ENCODE measurements at regions of chr7 and their contacts with region 1.

Region 1: DNA sequence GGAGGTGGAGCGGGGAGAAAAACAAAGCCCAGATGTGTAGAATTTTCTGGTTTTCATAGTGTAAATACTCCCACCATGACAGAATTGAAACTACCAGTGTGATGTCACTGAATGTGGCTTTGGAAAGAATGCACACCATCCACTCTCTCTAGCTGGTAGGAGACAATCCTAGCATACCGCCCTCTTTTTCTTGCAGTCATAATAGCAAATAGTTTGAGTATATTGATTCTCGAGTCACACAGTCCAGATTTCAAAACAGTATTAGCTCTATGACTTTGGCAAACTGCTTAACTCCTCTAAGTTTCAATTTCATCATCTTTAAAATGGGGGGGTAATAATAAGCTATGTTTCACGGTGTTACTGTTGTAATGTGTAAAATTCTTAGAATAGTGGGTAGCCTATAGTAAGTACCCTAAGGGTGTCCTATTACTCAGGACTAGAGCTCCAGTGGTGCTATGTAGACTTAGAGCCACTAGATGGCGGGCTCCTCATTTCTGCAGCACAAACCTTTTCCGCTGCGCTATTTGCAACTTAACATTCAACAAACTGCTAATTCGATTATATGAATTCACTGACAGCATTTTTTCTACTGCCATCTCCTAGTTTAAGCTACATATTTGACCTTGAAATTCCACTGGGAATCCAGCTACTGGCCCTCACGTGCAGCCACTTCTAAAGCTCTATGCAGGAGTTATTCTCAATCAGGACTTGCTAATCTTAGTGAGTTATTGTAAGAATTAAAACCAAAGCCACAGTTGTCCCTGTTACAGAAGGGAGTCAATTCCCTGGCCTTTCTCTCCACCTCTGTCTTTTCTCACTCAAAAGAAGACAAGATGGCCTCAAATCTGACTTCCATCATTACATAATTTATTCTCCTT is 18.7 kb downstream of the TAS2R40 start:
- DNase-seq: peak; percentile 87
- ATAC-seq: peak; percentile 66
- H3K4me3 ChIP-seq: peak overlapping the region; percentile 46; the same call in 1 of the 2 replicates
- H3K27ac ChIP-seq: peak overlapping the region; percentile 62
- H3K4me1 ChIP-seq: peaks cover 45% of the 10 kb centered on the region
- H3K27me3 ChIP-seq: no peaks in the 10 kb centered on the region
- CTCF ChIP-seq: peak; percentile 94

Region 2: DNA sequence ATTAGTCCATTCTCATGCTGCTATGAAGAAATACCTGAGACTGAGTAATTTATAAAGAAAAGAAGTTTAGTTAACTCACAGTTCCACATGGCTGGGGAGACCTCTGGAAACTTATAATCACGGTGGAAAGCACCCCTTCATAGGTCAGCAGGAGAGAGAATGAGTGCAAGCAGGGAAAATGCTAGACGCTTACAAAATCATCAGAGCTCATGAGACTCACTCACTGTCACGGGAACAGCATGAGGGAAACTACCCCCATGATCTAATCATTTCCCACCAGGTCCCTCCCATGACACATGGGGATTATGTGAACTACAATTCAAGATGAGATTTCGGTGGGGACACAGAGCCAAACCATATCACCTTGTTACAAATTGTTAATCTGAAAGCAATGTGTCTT is 41.5 kb before region 1 on chr7:
- CTCF ChIA-PET with region 1: no interaction called
- POLR2A ChIA-PET with region 1: no interaction called
- intact Hi-C with region 1: no loop called
- DNase-seq: no peak
- ATAC-seq: no peak
- H3K4me3 ChIP-seq: no peak overlapping the region
- H3K27ac ChIP-seq: no peak overlapping the region
- H3K4me1 ChIP-seq: no peaks in the 10 kb centered on the region
- H3K27me3 ChIP-seq: peaks cover 30% of the 10 kb centered on the region; the same call in 1 of the 2 replicates
- CTCF ChIP-seq: no peak

Region 3: GRCh38 chr7:143214789-143215679 is 25.5 kb before region 1 on chr7:
- CTCF ChIA-PET with region 1: interaction called, 14 read pairs
- POLR2A ChIA-PET with region 1: interaction called, 3 read pairs
- intact Hi-C with region 1: no loop called
- DNase-seq: peak; percentile 91
- ATAC-seq: peak; percentile 81
- H3K4me3 ChIP-seq: no peak overlapping the region
- H3K27ac ChIP-seq: no peak overlapping the region
- H3K4me1 ChIP-seq: no peaks in the 10 kb centered on the region
- H3K27me3 ChIP-seq: peaks cover 6% of the 10 kb centered on the region; the same call in 1 of the 2 replicates
- CTCF ChIP-seq: peak; percentile 100

Region 4: GRCh38 chr7:143279186-143280098 is 38.9 kb after region 1 on chr7:
- CTCF ChIA-PET with region 1: interaction called, 7 read pairs
- POLR2A ChIA-PET with region 1: no interaction called
- intact Hi-C with region 1: loop called (anchors 1 kb)
- DNase-seq: peak; percentile 91
- ATAC-seq: peak; percentile 80
- H3K4me3 ChIP-seq: peak overlapping the region; percentile 20; the same call in 1 of the 2 replicates
- H3K27ac ChIP-seq: peak overlapping the region; percentile 57
- H3K4me1 ChIP-seq: peaks cover 34% of the 10 kb centered on the region
- H3K27me3 ChIP-seq: no peaks in the 10 kb centered on the region
- CTCF ChIP-seq: no peak

Region 5: GRCh38 chr7:143305423-143306070 is 65.0 kb after region 1 on chr7:
- CTCF ChIA-PET with region 1: interaction called, 15 read pairs
- POLR2A ChIA-PET with region 1: interaction called, 5 read pairs
- intact Hi-C with region 1: loop called (anchors 1 kb)
- DNase-seq: peak; percentile 85
- ATAC-seq: peak; percentile 65
- H3K4me3 ChIP-seq: no peak overlapping the region
- H3K27ac ChIP-seq: no peak overlapping the region
- H3K4me1 ChIP-seq: peaks cover 18% of the 10 kb centered on the region
- H3K27me3 ChIP-seq: no peaks in the 10 kb centered on the region
- CTCF ChIP-seq: peak; percentile 94

Region 6: DNA sequence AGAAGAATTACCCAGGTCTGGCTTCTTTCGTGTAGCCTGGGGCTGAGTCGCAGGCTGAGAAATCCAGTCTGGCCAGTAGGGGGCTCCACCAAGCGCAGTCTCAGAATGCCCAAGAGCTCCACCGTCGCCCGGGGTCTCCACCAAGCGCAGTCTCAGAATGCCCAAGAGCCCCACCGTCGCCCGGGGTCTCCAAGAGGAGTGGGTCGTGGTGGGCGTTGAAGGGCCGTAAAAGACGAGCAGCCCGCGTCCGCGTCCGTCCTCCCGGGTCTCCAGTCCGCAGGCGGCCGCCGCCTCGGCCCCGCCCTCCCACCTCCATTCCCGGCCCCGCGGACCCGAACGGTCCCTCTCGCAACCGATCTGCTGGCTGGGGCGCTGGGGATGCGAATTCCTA is 139.7 kb after region 1 on chr7:
- CTCF ChIA-PET with region 1: interaction called, 4 read pairs
- POLR2A ChIA-PET with region 1: no interaction called
- intact Hi-C with region 1: loop called (anchors 2 kb)
- DNase-seq: peak; percentile 79
- ATAC-seq: peak; percentile 34
- H3K4me3 ChIP-seq: peak overlapping the region; percentile 96
- H3K27ac ChIP-seq: peak overlapping the region; percentile 95
- H3K4me1 ChIP-seq: peaks cover 55% of the 10 kb centered on the region
- H3K27me3 ChIP-seq: no peaks in the 10 kb centered on the region
- CTCF ChIP-seq: peak; percentile 87

Measured in PC-3 (cell line).